HepG2 (cell line): ENCODE measurements at regions of chr1 and their contacts with region 1.

Region 1: GRCh38 chr1:161749509-161750407 is at the start of gene DUSP12:
- DNase-seq: peak; percentile 90
- ATAC-seq: peak; percentile 99
- H3K4me3 ChIP-seq: peak within 1 kb of the TSS; percentile 92 to 97 (median 95)
- H3K27ac ChIP-seq: peak within 1 kb of the TSS; percentile 95
- H3K4me1 ChIP-seq: peaks cover 38% of the 10 kb centered on the region
- H3K27me3 ChIP-seq: no peaks in the 10 kb centered on the region; a peak in 2 of 5 replicates
- CTCF ChIP-seq: peak; percentile 79
- EP300 ChIP-seq: no peak
- POLR2A ChIP-seq: peak; percentile 84 to 90
- RAD21 ChIP-seq: peak; percentile 18; the same call in 1 of the 2 replicates
- total RNA-seq, gene DUSP12: 36.7 and 38.9 TPM in 2 replicates

Region 2: DNA sequence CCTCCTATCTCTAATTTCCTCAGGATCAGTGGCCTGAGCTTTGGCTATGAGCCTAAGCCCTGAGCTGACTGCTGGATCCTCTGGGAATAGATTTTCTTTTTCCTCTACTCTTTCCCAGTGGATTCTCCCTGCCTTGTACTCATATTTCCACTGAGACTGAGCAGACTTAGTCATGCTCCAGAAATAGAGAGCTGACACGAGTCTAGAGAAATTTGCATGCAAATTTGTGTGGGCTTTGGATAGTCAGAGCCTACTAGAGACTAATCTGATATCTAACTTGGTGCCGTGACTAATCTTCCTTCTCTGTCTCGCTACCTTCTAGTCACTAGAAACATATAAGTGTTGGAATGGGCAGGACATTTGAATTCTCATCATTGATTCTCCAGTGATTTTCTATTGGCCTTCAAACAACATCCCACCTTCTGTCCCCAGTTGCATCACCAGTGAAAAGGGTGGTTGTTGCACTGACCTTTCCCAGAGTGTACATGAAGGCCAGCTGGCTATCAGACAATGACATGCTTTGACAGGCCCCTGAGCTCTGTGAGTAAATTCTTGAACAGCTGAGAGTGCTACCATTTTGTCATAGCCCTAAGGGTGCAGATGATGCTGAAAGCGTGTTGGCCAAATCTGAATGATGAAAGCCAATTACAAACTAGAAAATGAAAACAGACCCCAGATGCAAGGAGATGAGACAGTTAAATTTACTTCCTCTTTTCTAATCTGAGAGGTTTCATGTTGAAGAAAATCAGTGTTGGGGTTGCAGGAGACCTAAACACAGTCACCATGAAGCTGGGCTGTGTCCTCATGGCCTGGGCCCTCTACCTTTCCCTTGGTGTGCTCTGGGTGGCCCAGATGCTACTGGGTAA is 43.0 kb before region 1 on chr1 and contains the start of gene FCRLA:
- CTCF ChIA-PET with region 1: no interaction called
- POLR2A ChIA-PET with region 1: no interaction called
- in situ Hi-C with region 1: no loop called
- intact Hi-C with region 1: no loop called
- DNase-seq: no peak
- ATAC-seq: no peak
- H3K4me3 ChIP-seq: no peak within 1 kb of the TSS
- H3K27ac ChIP-seq: no peak within 1 kb of the TSS
- H3K4me1 ChIP-seq: peaks cover 11% of the 10 kb centered on the region
- H3K27me3 ChIP-seq: no peaks in the 10 kb centered on the region; a peak in 1 of 5 replicates
- CTCF ChIP-seq: no peak
- EP300 ChIP-seq: no peak
- POLR2A ChIP-seq: no peak
- RAD21 ChIP-seq: no peak
- total RNA-seq, gene FCRLA: not detected in 2 replicates

Region 3: DNA sequence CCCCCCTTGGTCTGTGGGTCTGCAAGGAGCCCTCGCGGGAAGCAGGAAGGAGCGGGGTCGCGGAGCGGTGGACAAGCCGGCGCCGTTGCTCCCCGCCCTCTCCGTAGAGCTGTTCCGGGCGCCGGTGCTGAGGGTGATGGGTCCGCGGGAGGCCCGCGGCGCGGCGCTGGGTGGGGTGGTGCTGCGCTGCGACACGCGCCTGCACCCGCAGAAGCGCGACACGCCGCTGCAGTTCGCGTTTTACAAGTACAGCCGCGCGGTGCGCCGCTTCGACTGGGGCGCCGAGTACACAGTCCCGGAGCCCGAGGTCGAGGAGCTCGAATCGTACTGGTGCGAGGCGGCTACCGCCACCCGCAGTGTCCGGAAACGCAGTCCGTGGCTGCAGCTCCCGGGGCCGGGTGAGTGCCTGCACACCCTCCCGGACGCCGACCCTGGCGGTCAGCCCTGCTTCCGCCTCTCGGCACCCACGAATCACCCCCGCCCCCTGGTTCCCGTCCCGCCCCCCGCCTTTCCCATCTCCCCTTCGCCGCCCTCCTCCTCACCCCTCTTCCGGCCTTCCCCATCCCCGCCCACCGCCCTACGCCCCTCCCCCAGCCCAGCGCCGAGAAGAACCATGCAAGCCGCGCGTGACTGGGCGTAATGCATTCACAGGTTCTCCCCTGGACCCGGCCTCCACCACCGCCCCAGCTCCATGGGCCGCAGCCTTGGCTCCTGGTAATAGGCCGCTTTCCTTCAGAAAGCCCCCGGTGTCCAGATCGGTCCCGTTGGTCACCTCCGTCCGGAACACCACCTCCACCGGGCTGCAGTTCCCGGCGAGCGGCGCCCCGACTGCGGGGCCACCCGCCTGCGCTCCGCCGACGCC is 22.9 kb before region 1 on chr1:
- CTCF ChIA-PET with region 1: no interaction called
- POLR2A ChIA-PET with region 1: interaction called, 15 read pairs
- in situ Hi-C with region 1: no loop called
- intact Hi-C with region 1: no loop called
- DNase-seq: peak; percentile 55
- ATAC-seq: peak; percentile 82
- H3K4me3 ChIP-seq: peak overlapping the region; percentile 62 to 84 (median 69)
- H3K27ac ChIP-seq: no peak overlapping the region
- H3K4me1 ChIP-seq: peaks cover 19% of the 10 kb centered on the region
- H3K27me3 ChIP-seq: peaks cover 3 to 47% of the 10 kb centered on the region in 2 experiments; a peak in 4 of 5 replicates
- CTCF ChIP-seq: no peak
- EP300 ChIP-seq: no peak
- POLR2A ChIP-seq: peak; percentile 59 to 71; a peak in 3 of 4 replicates
- RAD21 ChIP-seq: no peak; the same call in 1 of the 2 replicates